ENCODE measurements at regions of chr1 and their contacts with region 1.

Region 1: GRCh38 chr1:3796215-3797061 is at the start of gene LRRC47:
- DNase-seq: peak; percentile 93 to 99 (median 96)
- H3K4me3 ChIP-seq: peak within 1 kb of the TSS; percentile 56 to 99 (median 92)
- H3K27ac ChIP-seq: peak within 1 kb of the TSS in 53 of 59 donors; percentile 0 to 89 (median 76)
- H3K27me3 ChIP-seq: no peaks in the 10 kb centered on the region
- CTCF ChIP-seq: peak in 48 of 56 donors; percentile 15 to 70 (median 44)
- total RNA-seq, gene LRRC47: 39.4 to 80.6 (median 62.9) TPM

Region 2: DNA sequence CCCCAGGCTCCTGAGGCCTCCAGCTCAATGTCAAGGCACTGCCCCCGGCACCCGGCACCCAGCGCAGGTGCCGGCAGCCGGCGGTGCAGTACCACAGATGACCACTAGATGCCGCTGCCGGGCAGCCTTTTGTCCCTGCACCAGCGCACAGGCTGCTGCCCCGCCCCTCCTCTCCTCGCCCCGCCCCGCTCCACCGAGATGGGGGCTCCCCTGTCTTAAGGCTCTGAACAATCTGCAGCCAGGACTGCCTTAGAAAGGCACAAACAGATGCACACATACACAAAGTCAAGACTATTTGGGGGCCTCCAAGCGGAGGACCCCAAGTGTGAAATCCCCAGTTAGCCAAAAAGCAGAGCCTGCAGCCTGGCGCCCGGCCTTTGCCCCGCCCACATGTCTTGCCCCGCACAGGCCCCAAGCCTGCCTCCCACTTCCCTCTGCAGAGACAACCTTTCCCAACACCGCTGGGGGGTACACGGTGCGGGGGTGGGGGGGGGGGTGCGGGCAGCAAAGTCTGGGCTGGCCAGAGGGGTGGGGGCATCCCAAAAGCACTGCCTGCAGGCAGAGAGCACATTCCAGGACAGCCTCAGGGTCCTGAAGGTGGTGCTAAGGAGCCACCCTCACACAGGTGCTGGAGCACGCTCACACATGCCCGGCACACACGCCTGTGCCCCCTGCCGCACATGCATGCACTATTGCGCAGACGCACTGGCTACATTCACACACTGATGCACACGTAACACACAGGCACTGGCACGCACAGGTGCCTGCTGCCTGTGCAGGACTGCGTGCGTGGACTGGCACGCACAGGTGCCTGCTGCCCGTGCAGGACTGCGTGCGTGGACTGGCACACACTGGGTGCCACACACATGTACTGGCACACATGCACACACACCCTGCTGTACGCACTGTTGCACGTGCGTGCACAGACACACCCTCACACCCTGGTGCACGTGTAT is 304.9 kb before region 1 on chr1:
- intact Hi-C with region 1: loop called in 1 of 2 experiments (anchors 5 kb)
- DNase-seq: peak; percentile 60 to 89 (median 73)
- H3K4me3 ChIP-seq: peak overlapping the region in 31 of 59 donors; percentile 8 to 51 (median 31)
- H3K27ac ChIP-seq: no peak overlapping the region
- H3K27me3 ChIP-seq: no peaks in the 10 kb centered on the region
- CTCF ChIP-seq: peak; percentile 96 to 100 (median 100)

Region 3: GRCh38 chr1:3649342-3650247 is 146.8 kb before region 1 on chr1 and contains the start of gene WRAP73:
- intact Hi-C with region 1: loop called in 1 of 2 experiments (anchors 5 kb)
- DNase-seq: peak; percentile 79 to 92 (median 88)
- H3K4me3 ChIP-seq: peak within 1 kb of the TSS; percentile 66 to 99 (median 94)
- H3K27ac ChIP-seq: peak within 1 kb of the TSS in 12 of 59 donors; percentile 27 to 85 (median 53)
- H3K27me3 ChIP-seq: peaks cover 4 to 46% (median 38%) of the 10 kb centered on the region in 45 donors
- CTCF ChIP-seq: peak in 41 of 56 donors; percentile 2 to 58 (median 32)
- total RNA-seq, gene WRAP73: 13.3 to 33.0 (median 22.0) TPM

Region 4: DNA sequence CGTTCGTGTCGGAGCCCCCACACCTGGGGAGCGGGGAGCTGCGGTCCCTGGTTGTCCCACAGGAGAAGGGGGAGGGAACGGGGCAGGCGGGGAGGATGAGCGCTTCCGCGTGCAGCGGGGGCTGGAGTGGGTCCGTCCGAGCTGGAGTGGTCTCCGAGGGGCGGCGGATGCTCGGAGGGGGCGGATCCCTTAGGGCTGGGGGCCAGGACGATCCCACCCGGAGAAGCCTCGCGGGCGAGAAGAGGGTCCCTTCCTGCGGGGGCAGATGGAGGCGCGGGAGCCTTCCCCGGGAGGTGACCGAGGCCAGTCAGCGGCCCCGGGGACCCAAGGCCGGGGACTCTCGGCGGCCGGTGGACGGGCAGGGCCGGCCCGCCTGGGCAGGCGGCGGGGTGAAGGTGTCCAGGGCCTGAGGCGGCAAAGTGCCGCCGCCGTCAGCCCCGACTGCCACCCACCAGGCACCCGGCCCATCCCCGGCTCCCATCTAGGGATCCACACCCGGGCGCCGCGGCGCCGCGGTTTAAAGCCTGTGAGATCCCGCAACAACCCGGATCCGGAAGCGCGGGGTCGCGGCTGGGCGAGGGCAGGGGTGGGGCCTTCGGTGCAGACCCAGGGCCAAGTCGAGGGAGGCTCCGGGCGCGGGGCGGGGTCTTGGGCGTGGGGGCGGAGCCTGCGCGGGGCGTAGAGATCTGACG is 49.5 kb before region 1 on chr1:
- intact Hi-C with region 1: loop called (anchors 2 to 5 kb)
- DNase-seq: peak; percentile 88 to 94 (median 90)
- H3K4me3 ChIP-seq: peak overlapping the region; percentile 50 to 84 (median 75)
- H3K27ac ChIP-seq: peak overlapping the region in 56 of 59 donors; percentile 2 to 88 (median 76)
- H3K27me3 ChIP-seq: no peaks in the 10 kb centered on the region
- CTCF ChIP-seq: peak in 2 of 56 donors; percentile 10 to 20

Region 5: GRCh38 chr1:3900119-3900968 is 103.9 kb after region 1 on chr1 and contains the start of gene C1orf174:
- intact Hi-C with region 1: loop called in 1 of 2 experiments (anchors 5 kb)
- DNase-seq: peak; percentile 88 to 98 (median 96)
- H3K4me3 ChIP-seq: peak within 1 kb of the TSS; percentile 72 to 100 (median 96)
- H3K27ac ChIP-seq: peak within 1 kb of the TSS; percentile 93 to 100 (median 99)
- H3K27me3 ChIP-seq: no peaks in the 10 kb centered on the region
- CTCF ChIP-seq: peak in 9 of 56 donors; percentile 6 to 19 (median 13)
- total RNA-seq, gene C1orf174: 8.6 to 24.2 (median 15.2) TPM

Measured in dorsolateral prefrontal cortex (tissue), 120 donors.